ENCODE measurements at regions of chr16 and their contacts with region 1.

Region 1: DNA sequence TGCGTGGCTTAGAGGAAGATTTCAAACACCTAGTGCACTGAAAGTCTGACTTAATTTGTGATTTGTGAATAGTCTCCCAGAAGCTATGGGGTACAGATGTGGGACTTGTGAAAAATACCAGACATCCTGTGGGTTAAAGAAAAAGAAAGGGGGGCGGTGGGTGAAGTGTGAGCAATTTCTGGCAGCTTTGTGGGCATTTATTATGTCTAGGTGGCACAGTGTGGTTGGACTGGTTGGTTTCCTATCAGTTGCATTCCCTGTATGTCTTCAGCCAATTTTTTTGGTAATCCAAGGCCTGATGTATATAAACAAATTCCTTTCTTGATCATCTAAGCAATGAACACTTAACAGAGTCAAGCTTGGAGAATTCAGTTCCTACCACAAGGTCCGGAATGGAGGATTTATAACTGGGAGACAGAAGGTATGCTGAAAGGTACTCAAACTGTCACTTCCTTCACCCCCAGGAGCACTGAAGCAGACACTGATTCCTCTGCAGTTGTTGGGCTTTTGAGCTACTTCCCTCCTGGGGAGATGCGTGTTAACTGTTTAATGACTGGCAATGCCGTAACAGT is 211.6 kb downstream of the WWOX start:
- DNase-seq: no peak
- ATAC-seq: no peak
- H3K4me3 ChIP-seq: no peak overlapping the region
- H3K27ac ChIP-seq: no peak overlapping the region
- H3K4me1 ChIP-seq: no peaks in the 10 kb centered on the region
- H3K27me3 ChIP-seq: no peaks in the 10 kb centered on the region
- CTCF ChIP-seq: no peak
- POLR2A ChIP-seq: no peak

Region 2: DNA sequence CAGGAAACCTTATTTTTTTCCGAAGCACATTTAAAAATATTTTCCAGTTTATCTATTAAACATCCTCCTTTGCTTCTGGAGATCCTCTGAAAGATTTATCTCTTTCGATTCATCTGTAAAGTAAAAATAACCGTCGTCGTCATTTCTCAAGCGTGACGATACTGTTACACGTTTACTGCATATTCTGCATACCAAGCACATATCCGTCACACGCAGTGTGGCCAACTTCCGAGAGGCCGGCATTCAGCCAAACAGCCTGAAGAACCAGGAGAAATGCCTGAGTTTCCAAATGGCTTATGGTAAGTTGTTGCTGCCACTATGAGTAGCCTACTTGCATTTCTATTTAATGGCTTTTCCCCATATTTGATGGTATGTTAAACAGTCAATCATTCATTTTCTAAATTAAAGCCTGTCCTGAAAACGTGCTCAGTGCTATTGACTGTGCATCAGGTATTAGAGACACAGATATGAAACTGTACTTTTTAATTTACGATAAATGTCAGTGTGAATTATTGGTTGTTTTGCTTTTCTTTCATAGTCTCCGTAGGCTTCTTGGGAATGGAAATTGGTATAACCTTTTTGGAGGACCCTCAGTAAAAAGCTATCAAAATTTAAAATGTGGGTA is 64.1 kb after region 1 on chr16:
- intact Hi-C with region 1: loop called in 1 of 10 experiments (anchors 10 kb)
- DNase-seq: peak in 2 of 5 donors; percentile 62 to 80
- ATAC-seq: peak in 2 of 4 donors; percentile 67 to 79
- H3K4me3 ChIP-seq: no peak overlapping the region
- H3K27ac ChIP-seq: peak overlapping the region in 1 of 12 donors; percentile 13
- H3K4me1 ChIP-seq: no peaks in the 10 kb centered on the region
- H3K27me3 ChIP-seq: no peaks in the 10 kb centered on the region
- CTCF ChIP-seq: no peak
- POLR2A ChIP-seq: no peak

Region 3: DNA sequence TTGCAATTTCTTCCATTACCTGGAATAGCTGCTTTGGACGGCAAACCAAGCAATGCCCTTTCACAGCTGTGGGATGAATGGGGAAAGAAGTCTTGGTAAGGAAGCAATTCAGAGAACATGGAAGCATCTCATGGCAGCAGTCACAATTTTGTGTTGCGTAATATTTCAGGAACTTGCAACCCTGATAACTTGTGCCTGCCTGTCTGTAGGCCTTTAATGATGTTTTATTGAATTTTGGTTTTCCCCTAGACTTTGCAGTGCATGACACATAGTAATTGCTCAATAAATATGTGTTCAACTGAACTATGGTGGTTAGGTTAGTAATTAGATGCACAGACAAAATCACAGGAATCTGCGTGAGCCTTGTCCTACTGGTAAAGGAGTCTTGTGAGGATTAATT is 227.8 kb after region 1 on chr16:
- intact Hi-C with region 1: no loop called
- DNase-seq: no peak
- ATAC-seq: no peak
- H3K4me3 ChIP-seq: no peak overlapping the region
- H3K27ac ChIP-seq: no peak overlapping the region
- H3K4me1 ChIP-seq: no peaks in the 10 kb centered on the region
- H3K27me3 ChIP-seq: no peaks in the 10 kb centered on the region
- CTCF ChIP-seq: no peak
- POLR2A ChIP-seq: no peak

Measured in heart left ventricle (tissue), 16 donors.